ENCODE measurements at regions of chr16 and their contacts with region 1.

Region 1: DNA sequence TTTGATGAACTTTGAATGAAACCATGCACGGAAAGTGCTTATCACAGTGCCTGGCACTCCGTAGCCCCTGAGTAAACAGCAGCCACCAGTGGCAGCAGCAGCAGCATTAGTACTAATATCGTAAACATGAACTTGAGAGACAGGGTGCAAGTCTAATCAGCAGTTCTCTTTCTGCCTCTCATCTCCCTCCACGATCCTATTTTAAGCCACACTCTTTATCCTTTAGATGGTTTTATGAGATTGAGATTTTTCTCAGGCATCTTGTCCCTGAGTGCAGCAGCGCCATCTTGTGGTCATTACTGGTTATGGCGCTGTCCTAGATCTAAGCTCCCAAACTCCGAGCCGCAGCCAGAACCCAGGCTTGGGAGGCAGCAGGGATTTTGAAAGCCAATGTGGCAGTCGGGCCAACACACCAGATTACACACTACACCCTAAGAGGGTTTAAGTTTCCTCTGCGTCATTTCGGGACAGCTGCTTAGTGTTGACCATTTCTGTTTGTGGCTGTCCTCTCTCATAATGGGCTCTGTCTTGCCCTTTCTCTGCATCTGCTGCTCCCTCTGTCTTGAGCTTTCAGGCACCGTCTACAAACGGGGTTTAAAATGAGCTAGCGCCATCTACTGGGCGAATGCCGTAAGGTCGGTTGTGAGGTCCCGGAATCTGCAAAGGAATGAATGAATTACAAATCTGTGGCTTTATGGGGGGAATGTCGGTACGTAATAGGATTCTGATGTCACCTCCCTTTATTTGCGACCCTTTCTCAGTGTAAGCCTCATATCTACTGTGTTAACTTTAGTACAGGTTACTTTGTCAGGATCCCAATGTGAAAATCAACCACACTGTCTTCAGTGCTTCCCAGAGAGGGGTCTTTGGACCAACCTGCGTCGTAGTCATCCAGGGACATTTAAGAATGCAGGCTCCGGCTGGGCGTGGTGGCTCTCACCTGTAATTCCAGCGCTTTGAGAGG is 64.5 kb downstream of the CYLD start:
- DNase-seq: peak; percentile 90
- ATAC-seq: peak; percentile 88
- H3K4me3 Mint-ChIP-seq: peak overlapping the region; percentile 61
- H3K27ac Mint-ChIP-seq: no peak overlapping the region
- H3K4me1 Mint-ChIP-seq: peaks cover 28% of the 10 kb centered on the region
- H3K27me3 Mint-ChIP-seq: no peaks in the 10 kb centered on the region
- CTCF ChIP-seq: peak; percentile 94

Region 2: GRCh38 chr16:50535506-50536257 is 270.7 kb before region 1 on chr16:
- CTCF ChIA-PET with region 1: no interaction called
- POLR2A ChIA-PET with region 1: no interaction called
- DNase-seq: no peak
- ATAC-seq: no peak
- H3K4me3 Mint-ChIP-seq: no peak overlapping the region
- H3K27ac Mint-ChIP-seq: no peak overlapping the region
- H3K4me1 Mint-ChIP-seq: peaks cover 15% of the 10 kb centered on the region
- H3K27me3 Mint-ChIP-seq: peaks cover 2% of the 10 kb centered on the region; the same call in 1 of the 2 replicates
- CTCF ChIP-seq: no peak

Region 3: GRCh38 chr16:50603206-50604064 is 202.9 kb before region 1 on chr16:
- CTCF ChIA-PET with region 1: interaction called, 11 read pairs
- POLR2A ChIA-PET with region 1: no interaction called
- DNase-seq: no peak
- ATAC-seq: peak; percentile 44
- H3K4me3 Mint-ChIP-seq: no peak overlapping the region
- H3K27ac Mint-ChIP-seq: peak overlapping the region; percentile 67
- H3K4me1 Mint-ChIP-seq: peaks cover 10% of the 10 kb centered on the region
- H3K27me3 Mint-ChIP-seq: no peaks in the 10 kb centered on the region
- CTCF ChIP-seq: no peak

Region 4: GRCh38 chr16:50675686-50676610 is 130.4 kb before region 1 on chr16:
- CTCF ChIA-PET with region 1: interaction called, 236 read pairs
- POLR2A ChIA-PET with region 1: no interaction called
- DNase-seq: no peak
- ATAC-seq: no peak
- H3K4me3 Mint-ChIP-seq: no peak overlapping the region
- H3K27ac Mint-ChIP-seq: no peak overlapping the region
- H3K4me1 Mint-ChIP-seq: no peaks in the 10 kb centered on the region
- H3K27me3 Mint-ChIP-seq: no peaks in the 10 kb centered on the region; the same call in 1 of the 2 replicates
- CTCF ChIP-seq: no peak

Region 5: DNA sequence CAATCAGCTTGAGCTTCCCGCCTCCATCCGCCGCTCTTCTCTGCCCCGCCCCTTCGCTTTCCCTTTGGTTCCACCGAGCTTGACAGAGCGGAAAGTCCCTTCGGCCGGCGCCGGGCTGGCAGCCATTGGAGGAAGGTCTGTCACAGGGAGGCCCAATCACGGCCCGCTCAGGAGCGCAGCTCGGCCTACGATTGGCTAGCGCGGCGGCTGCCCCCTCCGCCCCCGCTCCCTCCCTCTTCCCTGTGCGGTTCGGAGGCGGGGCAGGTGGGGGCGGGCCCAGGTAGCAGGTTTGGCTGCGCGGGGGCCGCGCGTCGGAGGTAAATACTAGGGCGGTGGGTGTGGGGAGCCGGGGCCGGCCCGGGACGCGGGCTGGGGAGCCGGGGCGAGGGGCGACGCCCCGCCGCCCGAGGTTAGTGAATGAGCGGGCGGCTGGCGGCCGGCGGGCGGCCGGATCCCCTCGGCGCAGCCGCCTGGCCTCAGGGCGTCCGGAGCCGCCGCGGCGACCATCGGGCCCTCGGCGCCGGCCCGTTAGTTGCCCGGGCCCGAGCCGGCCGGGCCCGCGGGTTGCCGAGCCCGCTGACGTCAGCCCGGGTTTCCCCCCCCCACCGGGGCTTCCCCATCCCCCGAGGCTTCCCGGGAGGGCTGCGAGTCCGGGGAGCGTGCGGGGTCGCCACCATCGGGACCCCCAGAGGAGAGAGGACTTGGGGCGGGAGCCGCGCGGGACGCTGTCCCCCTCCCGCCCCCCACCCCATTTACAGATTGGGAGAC is 64.4 kb before region 1 on chr16 and contains the start of gene CYLD:
- CTCF ChIA-PET with region 1: interaction called, 42 read pairs
- POLR2A ChIA-PET with region 1: no interaction called
- DNase-seq: peak; percentile 99
- ATAC-seq: peak; percentile 98
- H3K4me3 Mint-ChIP-seq: peak within 1 kb of the TSS; percentile 73
- H3K27ac Mint-ChIP-seq: peak within 1 kb of the TSS; percentile 87; the same call in 1 of the 2 replicates
- H3K4me1 Mint-ChIP-seq: peaks cover 34% of the 10 kb centered on the region
- H3K27me3 Mint-ChIP-seq: no peaks in the 10 kb centered on the region; the same call in none of the 2 replicates
- CTCF ChIP-seq: no peak
- total RNA-seq, gene CYLD: 9.4 to 10.8 TPM (median 9.6 TPM) in 3 replicates

Region 6: GRCh38 chr16:50822671-50823070 is 16.3 kb after region 1 on chr16:
- CTCF ChIA-PET with region 1: interaction called, 48 read pairs
- POLR2A ChIA-PET with region 1: no interaction called
- DNase-seq: no peak
- ATAC-seq: no peak
- H3K4me3 Mint-ChIP-seq: no peak overlapping the region
- H3K27ac Mint-ChIP-seq: no peak overlapping the region
- H3K4me1 Mint-ChIP-seq: peaks cover 3% of the 10 kb centered on the region
- H3K27me3 Mint-ChIP-seq: no peaks in the 10 kb centered on the region
- CTCF ChIP-seq: no peak

Region 7: GRCh38 chr16:50859628-50860360 is 53.4 kb after region 1 on chr16:
- CTCF ChIA-PET with region 1: interaction called, 12 read pairs
- POLR2A ChIA-PET with region 1: no interaction called
- DNase-seq: no peak
- ATAC-seq: no peak
- H3K4me3 Mint-ChIP-seq: no peak overlapping the region
- H3K27ac Mint-ChIP-seq: no peak overlapping the region
- H3K4me1 Mint-ChIP-seq: peaks cover 6% of the 10 kb centered on the region
- H3K27me3 Mint-ChIP-seq: no peaks in the 10 kb centered on the region
- CTCF ChIP-seq: no peak